GM12878 (cell line): ENCODE measurements at regions of chr2 and their contacts with region 1.

Region 1: GRCh38 chr2:44560352-44560751 is 198.6 kb downstream of the CAMKMT start:
- DNase-seq: no peak
- ATAC-seq: peak; percentile 57
- H3K4me3 ChIP-seq: no peak overlapping the region
- H3K27ac ChIP-seq: no peak overlapping the region
- H3K4me1 ChIP-seq: no peaks in the 10 kb centered on the region
- H3K27me3 ChIP-seq: no peaks in the 10 kb centered on the region
- CTCF ChIP-seq: peak; percentile 29 to 40 (median 36); a peak in 5 of 6 replicates
- EP300 ChIP-seq: no peak
- POLR2A ChIP-seq: no peak
- RAD21 ChIP-seq: peak; percentile 48

Region 2: DNA sequence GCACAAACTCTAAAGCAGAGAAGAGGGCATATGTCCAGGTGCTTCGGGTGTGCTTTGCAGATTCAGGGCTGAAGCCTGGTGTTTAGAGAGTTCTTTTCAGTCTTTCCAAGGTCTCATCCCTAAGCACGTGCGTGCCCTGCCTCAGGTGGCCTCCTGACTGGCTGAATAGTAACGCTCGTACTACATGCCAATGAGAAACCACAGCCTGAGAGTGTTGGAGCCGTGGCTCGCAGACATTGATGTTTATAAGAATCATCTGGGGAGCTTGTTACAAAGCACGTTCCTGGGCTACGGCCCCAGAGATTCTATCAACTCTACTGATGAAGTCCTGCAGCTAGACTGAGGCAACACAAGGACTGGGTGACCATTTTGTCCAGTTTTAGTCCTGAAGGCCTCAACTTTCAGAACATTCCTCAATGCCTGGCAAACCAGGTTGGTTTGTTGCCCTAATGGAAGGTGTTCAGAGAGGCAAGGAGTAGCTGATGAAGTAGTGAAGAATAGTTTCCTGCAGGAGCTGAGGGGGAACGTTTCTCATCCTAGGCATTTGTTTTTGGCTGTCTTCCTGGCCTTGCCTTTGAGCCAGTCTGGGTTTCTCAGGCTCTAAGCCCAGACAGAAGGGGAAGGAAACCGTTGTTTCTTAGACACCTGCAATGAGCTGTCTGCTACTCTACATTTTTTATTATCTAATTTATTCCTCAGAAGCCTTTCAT is 1736.5 kb before region 1 on chr2:
- CTCF ChIA-PET with region 1: no interaction called
- POLR2A ChIA-PET with region 1: no interaction called
- RAD21 ChIA-PET with region 1: no interaction called
- SMC1A ChIA-PET with region 1: no interaction called
- in situ Hi-C with region 1: no loop called
- intact Hi-C with region 1: no loop called
- DNase-seq: no peak
- ATAC-seq: no peak
- H3K4me3 ChIP-seq: no peak overlapping the region
- H3K27ac ChIP-seq: no peak overlapping the region
- H3K4me1 ChIP-seq: no peaks in the 10 kb centered on the region
- H3K27me3 ChIP-seq: no peaks in the 10 kb centered on the region; a peak in 1 of 4 replicates
- CTCF ChIP-seq: no peak
- EP300 ChIP-seq: no peak
- POLR2A ChIP-seq: no peak
- RAD21 ChIP-seq: no peak

Region 3: DNA sequence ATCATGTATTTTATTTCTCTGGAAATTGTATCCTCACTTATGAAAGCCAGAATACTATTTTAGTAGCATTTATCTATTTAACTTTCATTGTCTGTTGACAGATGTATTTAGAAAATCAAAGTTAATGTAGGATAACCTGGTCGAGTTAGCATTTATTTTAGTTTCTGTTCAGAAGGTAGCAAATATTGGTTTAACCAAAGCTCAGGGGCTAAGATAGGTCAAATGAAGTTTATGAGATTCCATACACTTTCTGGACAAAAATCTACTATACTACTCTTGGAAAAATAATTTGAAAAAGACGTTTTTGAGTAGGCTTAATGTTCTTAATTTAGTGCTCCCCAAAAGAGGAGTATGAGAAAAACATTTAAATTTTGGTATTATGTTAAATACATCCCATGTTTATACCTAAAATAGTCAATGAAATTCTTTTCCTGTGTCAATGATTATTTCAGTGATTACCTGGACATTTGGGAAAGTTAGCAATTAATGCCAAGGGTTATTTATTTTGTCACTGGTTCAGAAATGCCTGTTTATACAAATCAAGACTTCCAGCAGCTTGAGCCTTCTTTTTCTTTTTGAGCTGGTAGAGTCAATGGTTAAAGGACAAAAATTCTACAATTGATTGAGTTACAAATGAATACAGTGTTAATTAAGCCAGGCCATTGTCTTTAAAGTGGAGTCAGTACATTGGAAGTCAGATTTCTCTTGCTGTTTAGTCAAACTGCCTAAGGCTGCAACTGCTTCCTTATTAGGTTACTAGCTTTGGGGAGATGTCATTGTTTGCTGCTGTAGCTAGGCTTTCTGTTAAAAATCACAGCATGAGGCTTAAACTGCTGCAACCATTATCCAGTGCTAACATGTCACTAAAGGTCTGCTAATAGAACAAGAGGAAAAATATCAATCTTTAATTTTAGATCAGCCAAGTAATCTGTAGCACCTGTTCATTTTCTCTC is 16.3 kb before region 1 on chr2:
- CTCF ChIA-PET with region 1: interaction called, 17 read pairs
- POLR2A ChIA-PET with region 1: no interaction called
- RAD21 ChIA-PET with region 1: interaction called, 3 read pairs
- SMC1A ChIA-PET with region 1: interaction called, 24 read pairs
- in situ Hi-C with region 1: no loop called
- intact Hi-C with region 1: no loop called
- DNase-seq: no peak
- ATAC-seq: no peak
- H3K4me3 ChIP-seq: no peak overlapping the region
- H3K27ac ChIP-seq: no peak overlapping the region
- H3K4me1 ChIP-seq: peaks cover 5% of the 10 kb centered on the region
- H3K27me3 ChIP-seq: no peaks in the 10 kb centered on the region
- CTCF ChIP-seq: no peak
- EP300 ChIP-seq: no peak
- POLR2A ChIP-seq: no peak
- RAD21 ChIP-seq: no peak

Region 4: DNA sequence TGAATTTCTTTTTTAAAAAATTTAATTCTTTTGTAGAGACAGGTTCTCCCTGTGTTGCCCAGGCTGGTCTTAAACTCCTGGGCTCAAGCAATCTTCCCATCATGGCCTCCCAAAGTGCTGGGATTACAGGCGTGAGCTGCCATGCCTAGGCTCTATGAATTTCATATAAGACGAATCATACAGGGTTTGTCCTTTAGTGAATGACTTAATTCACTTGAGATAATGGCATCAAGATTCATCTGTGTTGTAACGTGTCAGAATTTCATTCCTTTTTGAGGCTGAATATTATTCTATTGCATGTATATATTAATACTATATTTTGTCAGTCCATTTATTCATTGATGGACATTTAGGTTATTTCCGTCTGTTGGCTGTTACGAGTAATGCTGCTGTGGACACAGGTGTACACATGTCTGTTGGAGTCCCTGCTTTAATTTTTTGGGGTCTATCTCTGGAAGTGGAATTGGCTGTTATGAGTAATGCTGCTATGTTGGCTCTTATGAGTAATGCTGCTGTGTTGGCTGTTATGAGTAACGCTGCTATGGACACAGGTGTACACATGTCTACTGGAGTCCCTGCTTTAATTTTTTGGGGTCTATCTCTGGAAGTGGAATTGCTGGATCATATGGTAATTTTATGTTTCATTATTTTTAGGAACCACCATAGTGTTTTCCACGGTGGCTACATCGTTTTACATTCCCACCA is 12.0 kb after region 1 on chr2:
- CTCF ChIA-PET with region 1: interaction called, 30 read pairs
- POLR2A ChIA-PET with region 1: no interaction called
- RAD21 ChIA-PET with region 1: interaction called, 6 read pairs
- SMC1A ChIA-PET with region 1: interaction called, 46 read pairs
- in situ Hi-C with region 1: no loop called
- intact Hi-C with region 1: no loop called
- DNase-seq: no peak
- ATAC-seq: peak; percentile 77
- H3K4me3 ChIP-seq: no peak overlapping the region
- H3K27ac ChIP-seq: no peak overlapping the region
- H3K4me1 ChIP-seq: peaks cover 5% of the 10 kb centered on the region
- H3K27me3 ChIP-seq: no peaks in the 10 kb centered on the region
- CTCF ChIP-seq: no peak
- EP300 ChIP-seq: peak in 1 of 2 experiments; percentile 32; a peak in 1 of 4 replicates
- POLR2A ChIP-seq: no peak
- RAD21 ChIP-seq: no peak

Region 5: GRCh38 chr2:44616667-44617155 is 56.4 kb after region 1 on chr2:
- CTCF ChIA-PET with region 1: interaction called, 16 read pairs
- POLR2A ChIA-PET with region 1: no interaction called
- RAD21 ChIA-PET with region 1: interaction called, 7 read pairs
- SMC1A ChIA-PET with region 1: interaction called, 31 read pairs
- in situ Hi-C with region 1: no loop called
- intact Hi-C with region 1: no loop called
- DNase-seq: peak; percentile 65
- ATAC-seq: peak; percentile 93
- H3K4me3 ChIP-seq: peak overlapping the region; percentile 42
- H3K27ac ChIP-seq: peak overlapping the region; percentile 71
- H3K4me1 ChIP-seq: peaks cover 26% of the 10 kb centered on the region
- H3K27me3 ChIP-seq: no peaks in the 10 kb centered on the region
- CTCF ChIP-seq: no peak
- EP300 ChIP-seq: peak; percentile 37 to 72; a peak in 2 of 4 replicates
- POLR2A ChIP-seq: no peak
- RAD21 ChIP-seq: no peak

Region 6: GRCh38 chr2:44668336-44668735 is 108.0 kb after region 1 on chr2:
- CTCF ChIA-PET with region 1: interaction called, 61 read pairs
- POLR2A ChIA-PET with region 1: no interaction called
- RAD21 ChIA-PET with region 1: interaction called, 17 read pairs
- SMC1A ChIA-PET with region 1: interaction called, 56 read pairs
- in situ Hi-C with region 1: no loop called
- intact Hi-C with region 1: loop called (anchors 2 kb)
- DNase-seq: no peak
- ATAC-seq: peak; percentile 73
- H3K4me3 ChIP-seq: no peak overlapping the region
- H3K27ac ChIP-seq: no peak overlapping the region
- H3K4me1 ChIP-seq: no peaks in the 10 kb centered on the region
- H3K27me3 ChIP-seq: no peaks in the 10 kb centered on the region
- CTCF ChIP-seq: peak; percentile 38 to 55 (median 47); a peak in 5 of 6 replicates
- EP300 ChIP-seq: no peak
- POLR2A ChIP-seq: no peak
- RAD21 ChIP-seq: peak; percentile 64

Region 7: DNA sequence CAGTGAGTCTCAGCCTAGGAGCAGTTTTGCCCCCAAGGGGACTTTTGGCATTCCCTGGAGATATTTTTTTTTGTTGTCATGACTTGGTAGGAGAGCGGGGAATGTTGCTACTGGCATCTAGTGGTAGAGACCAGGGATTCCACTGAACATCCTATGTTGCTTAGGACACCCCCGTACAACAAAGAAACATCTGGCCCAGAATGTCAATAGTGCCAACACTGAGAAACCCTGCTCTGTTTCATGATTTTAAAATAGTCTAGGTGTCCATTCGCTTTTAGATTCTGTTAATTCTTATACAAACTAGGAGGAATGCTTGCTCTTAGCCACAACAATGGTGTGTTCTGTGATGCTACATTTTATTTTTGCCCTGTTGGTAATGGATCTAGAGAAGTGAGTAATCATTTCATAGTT is 155.3 kb after region 1 on chr2:
- CTCF ChIA-PET with region 1: interaction called, 36 read pairs
- POLR2A ChIA-PET with region 1: interaction called, 3 read pairs
- RAD21 ChIA-PET with region 1: interaction called, 6 read pairs
- SMC1A ChIA-PET with region 1: interaction called, 27 read pairs
- in situ Hi-C with region 1: no loop called
- intact Hi-C with region 1: loop called (anchors 1 kb)
- DNase-seq: no peak
- ATAC-seq: peak; percentile 68
- H3K4me3 ChIP-seq: no peak overlapping the region
- H3K27ac ChIP-seq: no peak overlapping the region
- H3K4me1 ChIP-seq: peaks cover 4% of the 10 kb centered on the region; the same call in 1 of the 2 replicates
- H3K27me3 ChIP-seq: no peaks in the 10 kb centered on the region
- CTCF ChIP-seq: peak; percentile 14 to 39 (median 31); a peak in 3 of 6 replicates
- EP300 ChIP-seq: no peak
- POLR2A ChIP-seq: no peak
- RAD21 ChIP-seq: peak; percentile 49

Region 8: DNA sequence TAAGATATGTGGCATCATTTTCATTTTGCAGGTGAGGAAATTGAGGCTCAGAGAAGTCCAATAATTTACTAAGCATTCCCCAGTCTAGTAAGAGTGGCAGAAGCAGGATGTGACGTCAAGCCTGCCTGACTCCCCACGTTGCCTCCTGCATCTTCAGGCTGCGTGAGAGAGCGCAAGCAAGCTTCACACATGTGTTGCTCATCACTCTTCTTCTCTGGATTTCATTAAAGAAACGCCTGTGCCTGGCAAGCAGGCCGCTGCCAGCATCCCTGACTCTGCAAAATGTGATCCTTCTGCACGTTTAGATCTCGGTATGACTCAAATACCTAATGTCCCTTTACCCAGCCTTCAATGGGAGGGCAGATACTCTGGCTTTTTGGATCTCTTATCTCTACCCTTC is 1187.9 kb after region 1 on chr2:
- CTCF ChIA-PET with region 1: no interaction called
- POLR2A ChIA-PET with region 1: no interaction called
- RAD21 ChIA-PET with region 1: no interaction called
- SMC1A ChIA-PET with region 1: no interaction called
- in situ Hi-C with region 1: no loop called
- intact Hi-C with region 1: no loop called
- DNase-seq: no peak
- ATAC-seq: no peak
- H3K4me3 ChIP-seq: no peak overlapping the region
- H3K27ac ChIP-seq: no peak overlapping the region
- H3K4me1 ChIP-seq: peaks cover 7% of the 10 kb centered on the region; the same call in 1 of the 2 replicates
- H3K27me3 ChIP-seq: no peaks in the 10 kb centered on the region
- CTCF ChIP-seq: no peak
- EP300 ChIP-seq: no peak
- POLR2A ChIP-seq: no peak
- RAD21 ChIP-seq: no peak